IMR-90 (cell line): ENCODE measurements at regions of chr9 and their contacts with region 1.

Region 1: DNA sequence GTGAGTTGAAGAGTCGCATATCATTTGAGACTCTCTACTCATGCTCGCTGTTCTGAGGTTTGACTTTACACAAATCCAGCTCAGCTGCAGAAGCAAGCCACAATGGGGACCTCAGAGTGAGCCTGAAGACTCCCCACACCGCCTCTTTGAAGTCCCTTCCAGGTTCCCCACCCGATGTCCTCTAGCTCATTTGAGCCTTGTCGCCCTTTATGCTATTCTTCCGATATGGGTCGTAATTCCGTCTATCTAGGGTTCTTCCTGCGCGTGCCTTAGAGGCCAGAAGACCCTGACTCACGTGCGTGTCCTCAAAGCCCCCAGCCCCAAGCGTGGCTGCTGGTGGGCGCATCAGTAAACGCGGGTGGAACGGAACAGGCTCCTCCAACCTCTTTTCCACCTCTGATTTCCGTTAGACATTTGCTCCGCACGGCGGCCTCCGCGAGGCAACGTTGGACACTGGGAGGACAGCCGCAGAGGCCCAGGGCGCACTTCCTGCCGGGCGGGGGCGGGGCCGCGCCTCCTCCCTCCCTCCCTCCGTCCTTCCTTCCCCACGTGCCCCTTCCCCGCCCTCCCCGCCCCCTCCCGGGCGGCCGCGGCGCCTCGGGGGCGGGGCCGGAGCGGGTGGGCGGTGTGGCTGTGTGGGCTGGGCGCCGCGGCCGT is at the start of gene SNX30:
- DNase-seq: peak; percentile 85
- ATAC-seq: peak; percentile 87
- H3K4me3 ChIP-seq: peak within 1 kb of the TSS; percentile 89
- H3K27ac ChIP-seq: peak within 1 kb of the TSS; percentile 73
- H3K4me1 ChIP-seq: peaks cover 21% of the 10 kb centered on the region
- H3K27me3 ChIP-seq: no peaks in the 10 kb centered on the region
- CTCF ChIP-seq: no peak; the same call in 1 of the 2 replicates
- POLR2A ChIP-seq: peak; percentile 75
- RAD21 ChIP-seq: peak; percentile 41
- total RNA-seq, gene SNX30: 18.8 and 23.6 TPM in 2 replicates

Region 2: DNA sequence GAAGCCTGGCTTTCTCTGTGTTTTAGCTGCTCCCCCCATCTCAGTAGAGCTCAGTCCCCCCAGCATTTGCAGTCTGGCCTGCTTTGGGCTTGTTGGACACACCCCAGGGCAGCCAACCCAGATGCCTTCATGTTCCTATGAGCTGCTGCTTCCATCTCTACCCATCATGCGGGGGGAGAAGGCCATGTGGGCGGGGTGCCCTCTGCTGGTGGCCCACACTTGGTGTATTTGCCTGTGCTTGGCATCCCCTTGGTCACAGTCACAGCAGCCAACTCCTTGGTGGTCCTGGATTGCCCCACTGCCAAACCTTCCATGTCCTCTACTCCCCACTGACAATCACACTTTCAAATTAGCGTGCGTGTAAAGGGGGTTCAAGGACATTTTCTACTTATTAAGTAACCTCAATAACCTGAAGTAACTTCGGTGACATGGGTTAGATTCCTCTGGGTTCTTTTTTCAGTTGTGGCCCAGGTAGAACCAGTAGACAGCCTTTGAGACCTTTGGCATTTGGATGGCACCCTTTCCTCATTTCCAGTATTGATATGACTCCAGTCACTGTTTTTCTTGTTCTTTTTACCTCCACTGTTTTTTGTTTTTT is 43.1 kb after region 1 on chr9:
- CTCF ChIA-PET with region 1: no interaction called
- POLR2A ChIA-PET with region 1: no interaction called
- dilution Hi-C with region 1: no loop called
- in situ Hi-C with region 1: no loop called
- intact Hi-C with region 1: loop called (anchors 5 kb)
- DNase-seq: peak; percentile 56
- ATAC-seq: peak; percentile 76
- H3K4me3 ChIP-seq: no peak overlapping the region
- H3K27ac ChIP-seq: no peak overlapping the region
- H3K4me1 ChIP-seq: peaks cover 13% of the 10 kb centered on the region
- H3K27me3 ChIP-seq: no peaks in the 10 kb centered on the region
- CTCF ChIP-seq: peak; percentile 70
- POLR2A ChIP-seq: no peak
- RAD21 ChIP-seq: peak; percentile 83

Region 3: DNA sequence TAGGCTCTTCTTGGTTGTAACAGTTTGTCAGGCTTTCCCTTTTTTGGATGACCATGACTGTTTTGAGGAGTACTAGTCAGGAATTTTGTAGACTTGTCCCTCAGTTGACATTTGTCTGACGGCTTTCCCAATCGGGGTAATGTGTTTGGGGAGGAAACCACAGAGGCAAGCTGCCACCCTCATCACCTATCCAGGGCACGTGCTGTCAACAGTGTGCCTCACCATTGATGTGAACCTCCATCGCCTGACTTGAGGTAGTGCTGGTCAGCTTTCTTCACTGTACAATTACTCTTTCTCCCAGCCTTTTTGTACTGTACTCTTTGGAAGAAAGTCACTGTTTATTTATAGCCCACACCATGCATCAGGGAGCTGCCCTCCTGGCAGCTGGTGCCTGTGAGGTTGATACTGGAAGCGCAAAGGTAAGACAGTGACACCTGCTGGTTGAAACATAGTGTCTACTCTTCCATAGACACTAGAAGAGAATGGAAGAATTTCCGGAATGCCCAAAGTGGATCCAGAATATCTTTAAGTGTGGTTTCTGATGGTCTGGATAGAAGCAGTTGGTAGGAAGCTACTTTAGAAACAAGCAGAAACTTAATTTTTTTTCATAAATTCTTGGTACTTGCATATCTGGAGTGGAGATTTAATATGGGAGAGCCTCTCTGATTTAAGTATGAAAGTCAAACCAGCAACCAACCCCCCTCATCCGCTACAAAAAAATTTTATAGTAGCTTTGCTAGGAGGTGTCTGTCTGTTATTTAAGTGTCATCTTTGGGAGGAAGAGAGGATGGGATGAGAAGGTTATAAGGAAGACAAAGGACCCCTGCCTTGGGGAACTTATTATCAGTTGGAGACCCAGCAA is 69.6 kb after region 1 on chr9:
- CTCF ChIA-PET with region 1: no interaction called
- POLR2A ChIA-PET with region 1: no interaction called
- dilution Hi-C with region 1: no loop called
- in situ Hi-C with region 1: no loop called
- intact Hi-C with region 1: loop called (anchors 5 kb)
- DNase-seq: peak; percentile 85
- ATAC-seq: peak; percentile 96
- H3K4me3 ChIP-seq: no peak overlapping the region
- H3K27ac ChIP-seq: no peak overlapping the region
- H3K4me1 ChIP-seq: peaks cover 2% of the 10 kb centered on the region; the same call in 1 of the 2 replicates
- H3K27me3 ChIP-seq: no peaks in the 10 kb centered on the region
- CTCF ChIP-seq: peak; percentile 68
- POLR2A ChIP-seq: no peak
- RAD21 ChIP-seq: peak; percentile 82

Region 4: DNA sequence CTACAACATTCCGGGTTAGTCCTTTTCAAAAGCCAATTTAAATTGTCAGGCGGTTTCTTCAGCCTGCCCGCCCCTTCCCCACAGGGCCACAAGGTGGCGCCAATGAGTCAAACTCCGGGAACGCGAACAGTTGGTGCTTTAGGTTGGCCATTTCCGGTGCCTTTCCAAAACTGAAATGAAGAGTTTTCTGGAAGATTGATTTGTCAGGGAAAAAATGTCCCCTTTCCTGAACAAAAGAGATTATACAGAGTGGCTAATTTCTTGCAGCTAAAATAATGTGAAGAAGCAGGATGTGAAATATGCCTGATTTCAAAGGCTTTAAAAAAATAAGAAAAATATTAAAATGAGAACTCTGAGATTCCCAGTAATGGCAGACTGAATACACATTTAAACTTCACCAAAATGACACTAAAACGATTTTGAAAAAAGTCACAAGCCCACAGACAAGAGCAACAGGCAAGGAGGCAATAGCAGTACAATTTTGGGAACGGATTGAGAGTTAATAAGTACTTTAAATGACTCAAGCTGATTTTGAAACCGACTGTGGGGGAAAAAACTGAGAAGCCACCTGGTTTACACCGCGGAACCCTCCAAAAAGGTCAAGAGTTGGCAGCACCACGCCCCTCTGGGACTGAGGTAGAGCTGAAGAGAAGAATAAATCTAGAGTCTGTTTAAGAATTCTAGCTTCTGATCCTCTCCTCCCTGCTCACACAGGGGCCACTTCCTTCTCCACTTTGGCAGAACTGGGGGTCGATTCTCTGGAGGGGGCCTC is 94.7 kb after region 1 on chr9:
- CTCF ChIA-PET with region 1: no interaction called
- POLR2A ChIA-PET with region 1: no interaction called
- dilution Hi-C with region 1: no loop called
- in situ Hi-C with region 1: no loop called
- intact Hi-C with region 1: no loop called
- DNase-seq: peak; percentile 66
- ATAC-seq: peak; percentile 79
- H3K4me3 ChIP-seq: no peak overlapping the region
- H3K27ac ChIP-seq: no peak overlapping the region
- H3K4me1 ChIP-seq: peaks cover 6% of the 10 kb centered on the region
- H3K27me3 ChIP-seq: no peaks in the 10 kb centered on the region
- CTCF ChIP-seq: peak; percentile 94
- POLR2A ChIP-seq: no peak
- RAD21 ChIP-seq: peak; percentile 86

Region 5: GRCh38 chr9:112898872-112899311 is 148.7 kb after region 1 on chr9:
- CTCF ChIA-PET with region 1: interaction called, 4 read pairs
- POLR2A ChIA-PET with region 1: no interaction called
- dilution Hi-C with region 1: no loop called
- in situ Hi-C with region 1: no loop called
- intact Hi-C with region 1: loop called (anchors 5 kb)
- DNase-seq: no peak
- ATAC-seq: no peak
- H3K4me3 ChIP-seq: no peak overlapping the region
- H3K27ac ChIP-seq: no peak overlapping the region
- H3K4me1 ChIP-seq: no peaks in the 10 kb centered on the region
- H3K27me3 ChIP-seq: peaks cover 10% of the 10 kb centered on the region; the same call in 1 of the 2 replicates
- CTCF ChIP-seq: no peak
- POLR2A ChIP-seq: no peak
- RAD21 ChIP-seq: no peak

Region 6: DNA sequence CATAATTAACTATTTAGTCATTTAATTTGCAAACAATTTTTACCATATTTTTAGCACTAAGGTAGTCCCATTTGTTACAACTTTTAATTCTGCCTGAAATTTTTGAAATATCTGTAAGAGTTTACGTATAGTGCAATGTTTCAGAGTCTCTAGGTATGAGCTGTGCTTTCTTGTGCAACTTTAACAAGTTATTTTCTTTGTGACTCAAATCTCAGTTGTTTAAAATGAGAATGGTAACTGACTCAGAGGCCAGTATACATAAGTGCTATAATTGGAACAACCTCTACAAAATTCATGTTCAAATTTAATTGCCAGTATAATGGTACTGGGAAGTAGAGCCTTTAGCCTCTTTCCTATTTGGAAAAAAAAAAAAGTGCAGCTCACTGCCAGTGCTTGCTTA is 276.0 kb after region 1 on chr9:
- CTCF ChIA-PET with region 1: no interaction called
- POLR2A ChIA-PET with region 1: no interaction called
- dilution Hi-C with region 1: no loop called
- in situ Hi-C with region 1: no loop called
- intact Hi-C with region 1: no loop called
- DNase-seq: peak; percentile 52
- ATAC-seq: peak; percentile 67
- H3K4me3 ChIP-seq: no peak overlapping the region
- H3K27ac ChIP-seq: no peak overlapping the region
- H3K4me1 ChIP-seq: no peaks in the 10 kb centered on the region
- H3K27me3 ChIP-seq: no peaks in the 10 kb centered on the region
- CTCF ChIP-seq: no peak
- POLR2A ChIP-seq: no peak
- RAD21 ChIP-seq: no peak